Sciatic nerve (tissue), 2 donors: ENCODE measurements at regions of chr10 and their contacts with region 1.

Region 1: DNA sequence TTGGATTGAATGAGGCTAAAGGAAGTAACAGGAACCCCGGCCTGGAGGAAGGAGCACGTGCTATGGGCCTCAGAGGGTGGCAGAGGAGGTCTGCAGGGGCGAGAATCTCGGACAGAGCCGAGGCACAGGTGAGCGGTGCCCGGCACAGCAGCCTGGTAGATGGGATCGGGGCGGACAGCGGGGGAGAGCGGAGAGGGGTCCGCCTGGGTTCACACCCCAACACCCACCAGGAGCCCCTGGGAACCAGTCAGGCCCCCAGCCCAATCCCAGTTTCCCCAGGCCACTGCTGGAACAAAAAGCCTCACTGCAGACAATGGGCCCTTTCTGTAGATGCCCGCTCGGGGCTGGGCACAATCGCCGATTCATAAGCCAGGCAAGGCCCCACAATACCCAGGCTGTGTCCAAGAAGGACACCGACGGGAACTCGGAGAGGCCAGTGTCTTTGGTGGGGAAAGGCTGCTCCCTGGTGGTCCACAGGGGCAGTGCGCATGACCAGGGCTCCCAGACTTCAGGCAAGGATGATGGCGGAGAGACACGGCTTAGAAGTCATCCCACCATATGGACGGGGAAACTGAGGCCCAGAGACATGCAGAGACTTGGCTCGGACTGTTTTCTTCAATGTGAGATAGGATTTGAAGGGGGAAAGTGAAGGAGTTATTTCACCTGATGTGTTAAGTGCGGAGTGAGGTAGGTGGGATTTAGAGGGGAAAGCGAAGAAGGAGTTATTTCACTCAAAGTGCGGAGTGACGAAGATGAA is 106.9 kb upstream of the GPR26 start:
- DNase-seq: peak; percentile 87
- ATAC-seq: peak; percentile 92

Region 2: GRCh38 chr10:121781101-121781500 is 1778.1 kb before region 1 on chr10:
- intact Hi-C with region 1: no loop called
- DNase-seq: no peak
- ATAC-seq: no peak

Region 3: GRCh38 chr10:122342293-122343134 is 1216.7 kb before region 1 on chr10:
- intact Hi-C with region 1: loop called (anchors 5 kb)
- DNase-seq: no peak
- ATAC-seq: peak; percentile 79

Region 4: DNA sequence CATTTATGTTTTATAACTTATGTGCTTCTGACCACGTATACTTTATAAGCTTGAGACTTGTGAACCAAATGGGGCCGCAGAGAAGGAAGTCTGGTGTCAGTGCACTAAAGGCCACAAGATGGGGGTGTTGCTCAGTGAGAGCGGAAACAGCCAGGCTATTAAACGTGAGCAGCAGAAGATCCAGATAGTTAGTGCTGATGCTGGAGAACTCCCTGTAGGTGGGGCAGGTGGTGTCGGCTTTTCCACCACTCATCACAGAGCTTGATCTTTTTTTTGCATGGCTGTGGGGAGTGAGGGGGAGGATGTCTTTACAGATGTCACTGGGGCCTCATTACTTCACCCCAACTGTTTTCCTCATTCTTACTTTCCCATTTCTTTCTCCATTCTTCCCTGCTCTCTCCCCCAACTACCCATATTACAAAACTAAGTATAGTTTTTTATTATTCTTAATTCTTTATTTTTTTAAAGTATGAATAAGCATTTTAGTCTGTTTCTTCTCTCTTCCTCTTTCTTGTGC is 515.8 kb before region 1 on chr10:
- intact Hi-C with region 1: loop called (anchors 10 kb)
- DNase-seq: no peak
- ATAC-seq: no peak

Region 5: DNA sequence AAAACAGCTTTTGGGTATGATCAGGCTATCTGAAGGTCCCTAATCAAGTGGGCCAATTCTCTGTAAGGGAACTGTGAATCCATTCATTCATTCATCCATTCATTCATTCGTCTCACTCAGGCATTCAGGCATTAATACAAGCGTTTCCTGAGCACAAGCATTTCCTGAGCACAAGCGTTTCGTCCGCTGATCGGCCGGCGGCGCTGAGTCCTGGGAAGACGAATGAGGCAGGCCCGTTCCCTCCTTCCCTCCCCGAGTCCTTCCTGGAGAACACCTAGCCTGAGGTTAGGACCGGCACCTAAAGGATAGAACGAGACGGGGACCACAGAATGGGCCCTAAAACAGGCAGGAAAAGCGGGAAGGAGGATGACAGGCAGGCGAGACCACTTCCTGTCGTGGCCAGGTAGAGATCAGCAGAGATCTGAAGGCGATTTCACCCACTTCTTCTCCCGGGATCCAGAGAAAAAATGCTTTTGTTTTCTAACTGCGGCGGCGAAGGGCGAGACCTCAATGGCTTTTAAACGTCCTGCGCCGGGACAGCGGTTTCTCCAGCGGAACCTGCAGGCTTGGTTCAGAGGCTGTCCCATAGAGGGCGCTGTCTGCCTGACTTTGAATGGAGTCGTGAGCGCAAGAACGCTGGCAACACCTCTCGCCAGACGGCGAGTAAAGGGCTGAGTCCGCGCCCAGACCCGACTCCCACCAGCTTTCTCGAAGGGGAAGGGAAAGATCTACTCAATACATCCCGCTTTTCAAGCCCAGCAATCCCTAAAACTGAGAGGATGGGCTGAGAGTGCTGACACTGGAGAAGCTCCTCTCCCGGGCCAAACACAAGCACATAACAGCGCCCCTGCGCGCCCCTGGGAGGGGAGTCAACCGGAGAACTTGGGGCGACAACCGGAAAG is 426.4 kb before region 1 on chr10:
- intact Hi-C with region 1: loop called (anchors 5 kb)
- DNase-seq: peak; percentile 94
- ATAC-seq: peak; percentile 89